HEK293 (cell line): ENCODE measurements at regions of chr11 and their contacts with region 1.

Region 1: DNA sequence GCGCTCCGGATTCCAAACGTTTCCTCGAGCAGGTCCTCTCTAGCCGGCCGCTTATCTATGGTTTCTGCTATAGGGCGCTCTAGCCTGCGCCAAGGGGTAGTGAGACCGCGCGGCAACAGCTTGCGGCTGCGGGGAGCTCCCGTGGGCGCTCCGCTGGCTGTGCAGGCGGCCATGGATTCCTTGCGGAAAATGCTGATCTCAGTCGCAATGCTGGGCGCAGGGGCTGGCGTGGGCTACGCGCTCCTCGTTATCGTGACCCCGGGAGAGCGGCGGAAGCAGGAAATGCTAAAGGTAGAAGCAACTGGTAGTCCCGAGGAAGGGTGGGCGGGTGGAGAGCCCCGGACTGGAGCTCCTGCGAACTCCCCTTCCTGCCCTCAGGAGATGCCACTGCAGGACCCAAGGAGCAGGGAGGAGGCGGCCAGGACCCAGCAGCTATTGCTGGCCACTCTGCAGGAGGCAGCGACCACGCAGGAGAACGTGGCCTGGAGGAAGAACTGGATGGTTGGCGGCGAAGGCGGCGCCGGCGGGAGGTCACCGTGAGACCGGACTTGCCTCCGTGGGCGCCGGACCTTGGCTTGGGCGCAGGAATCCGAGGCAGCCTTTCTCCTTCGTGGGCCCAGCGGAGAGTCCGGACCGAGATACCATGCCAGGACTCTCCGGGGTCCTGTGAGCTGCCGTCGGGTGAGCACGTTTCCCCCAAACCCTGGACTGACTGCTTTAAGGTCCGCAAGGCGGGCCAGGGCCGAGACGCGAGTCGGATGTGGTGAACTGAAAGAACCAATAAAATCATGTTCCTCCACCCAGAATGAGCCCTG is at the starts of genes LBHD1 and UQCC3:
- H3K4me3 ChIP-seq: peak within 1 kb of the TSS; percentile 84
- H3K27ac ChIP-seq: peak within 1 kb of the TSS; percentile 65
- H3K4me1 ChIP-seq: no peaks in the 10 kb centered on the region
- CTCF ChIP-seq: no peak

Region 2: GRCh38 chr11:62324738-62325556 is 346.8 kb before region 1 on chr11:
- CTCF ChIA-PET with region 1: no interaction called
- POLR2A ChIA-PET with region 1: no interaction called
- H3K4me3 ChIP-seq: no peak overlapping the region
- H3K27ac ChIP-seq: no peak overlapping the region
- H3K4me1 ChIP-seq: no peaks in the 10 kb centered on the region
- CTCF ChIP-seq: no peak

Region 3: GRCh38 chr11:62601394-62602140 is 70.2 kb before region 1 on chr11 and contains the start of gene MTA2:
- CTCF ChIA-PET with region 1: no interaction called
- POLR2A ChIA-PET with region 1: interaction called, 12 read pairs
- H3K4me3 ChIP-seq: peak within 1 kb of the TSS; percentile 91
- H3K27ac ChIP-seq: peak within 1 kb of the TSS; percentile 95
- H3K4me1 ChIP-seq: no peaks in the 10 kb centered on the region
- CTCF ChIP-seq: no peak

Region 4: GRCh38 chr11:62645956-62646824 is 25.6 kb before region 1 on chr11 and contains the start of gene GANAB:
- CTCF ChIA-PET with region 1: no interaction called
- POLR2A ChIA-PET with region 1: interaction called, 59 read pairs
- H3K4me3 ChIP-seq: peak within 1 kb of the TSS; percentile 86
- H3K27ac ChIP-seq: peak within 1 kb of the TSS; percentile 83
- H3K4me1 ChIP-seq: peaks cover 3% of the 10 kb centered on the region; the same call in 1 of the 2 replicates
- CTCF ChIP-seq: 0 out of 2 replicates have a peak, but pooled peaks have one; percentile 12

Region 5: GRCh38 chr11:62689421-62690183 is 17.8 kb after region 1 on chr11 and contains the start of gene LRRN4CL:
- CTCF ChIA-PET with region 1: interaction called, 9 read pairs
- POLR2A ChIA-PET with region 1: interaction called, 12 read pairs
- H3K4me3 ChIP-seq: no peak within 1 kb of the TSS
- H3K27ac ChIP-seq: no peak within 1 kb of the TSS
- H3K4me1 ChIP-seq: no peaks in the 10 kb centered on the region
- CTCF ChIP-seq: no peak

Region 6: GRCh38 chr11:62705880-62706849 is 34.4 kb after region 1 on chr11:
- CTCF ChIA-PET with region 1: interaction called, 3 read pairs
- POLR2A ChIA-PET with region 1: interaction called, 13 read pairs
- H3K4me3 ChIP-seq: peak overlapping the region; percentile 62
- H3K27ac ChIP-seq: peak overlapping the region; percentile 62
- H3K4me1 ChIP-seq: peaks cover 3% of the 10 kb centered on the region; the same call in 1 of the 2 replicates
- CTCF ChIP-seq: no peak

Region 7: DNA sequence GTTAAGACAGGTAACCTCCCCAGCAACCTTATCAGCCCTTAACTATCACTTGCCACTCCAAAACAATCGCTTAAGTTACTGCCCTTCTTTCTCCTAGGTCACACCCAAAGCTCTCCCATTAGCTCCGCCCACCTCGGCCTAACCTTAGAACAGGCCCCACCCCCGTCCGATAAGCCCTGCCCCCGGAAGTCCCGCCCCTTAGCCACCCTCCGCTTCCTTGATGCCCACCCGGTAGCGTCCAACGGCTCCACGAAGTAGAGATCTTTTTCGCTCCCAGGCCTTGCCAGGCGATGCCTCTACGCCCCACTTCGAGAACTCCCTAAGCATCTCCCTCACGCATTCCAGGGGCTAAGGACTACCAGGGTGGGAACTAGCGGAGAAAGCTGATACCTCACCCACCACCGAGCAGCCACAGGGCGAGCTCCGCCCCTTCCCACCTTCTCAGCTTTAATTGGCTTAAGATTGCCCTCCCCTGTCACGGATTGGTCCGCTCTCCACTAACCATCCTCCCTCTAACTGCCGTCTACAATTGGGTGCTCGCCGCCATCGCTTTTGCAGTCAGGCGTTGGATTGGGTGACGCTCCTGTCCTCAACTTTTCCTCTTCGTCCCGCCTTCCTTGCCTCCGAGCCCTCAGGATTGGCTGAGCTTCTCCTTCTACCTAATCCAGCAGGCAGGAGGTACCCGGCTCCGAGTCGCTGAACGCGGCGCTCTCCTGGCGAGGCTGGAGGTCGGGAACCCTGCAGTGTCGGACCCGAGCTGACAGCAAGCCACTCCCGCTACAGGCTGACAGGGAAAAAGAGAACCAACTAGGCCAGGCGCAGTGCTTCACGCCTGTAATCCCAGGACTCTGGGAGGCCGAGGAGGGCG is 82.2 kb after region 1 on chr11 and contains the start of gene ZBTB3:
- CTCF ChIA-PET with region 1: no interaction called
- POLR2A ChIA-PET with region 1: interaction called, 14 read pairs
- H3K4me3 ChIP-seq: peak within 1 kb of the TSS; percentile 73
- H3K27ac ChIP-seq: peak within 1 kb of the TSS; percentile 32; the same call in 1 of the 2 replicates
- H3K4me1 ChIP-seq: no peaks in the 10 kb centered on the region
- CTCF ChIP-seq: no peak